GM12878 (cell line): ENCODE measurements at regions of chr5 and their contacts with region 1.

Region 1: GRCh38 chr5:81751009-81751835 is at the start of gene SSBP2:
- DNase-seq: peak; percentile 95
- ATAC-seq: peak; percentile 82
- H3K4me3 ChIP-seq: peak within 1 kb of the TSS; percentile 81
- H3K27ac ChIP-seq: peak within 1 kb of the TSS; percentile 95
- H3K4me1 ChIP-seq: peaks cover 10% of the 10 kb centered on the region
- H3K27me3 ChIP-seq: no peaks in the 10 kb centered on the region
- CTCF ChIP-seq: no peak
- EP300 ChIP-seq: peak; percentile 60 to 99; a peak in 3 of 4 replicates
- POLR2A ChIP-seq: peak; percentile 85
- RAD21 ChIP-seq: peak; percentile 50
- polyA plus RNA-seq, gene SSBP2: 117 to 120 TPM

Region 2: DNA sequence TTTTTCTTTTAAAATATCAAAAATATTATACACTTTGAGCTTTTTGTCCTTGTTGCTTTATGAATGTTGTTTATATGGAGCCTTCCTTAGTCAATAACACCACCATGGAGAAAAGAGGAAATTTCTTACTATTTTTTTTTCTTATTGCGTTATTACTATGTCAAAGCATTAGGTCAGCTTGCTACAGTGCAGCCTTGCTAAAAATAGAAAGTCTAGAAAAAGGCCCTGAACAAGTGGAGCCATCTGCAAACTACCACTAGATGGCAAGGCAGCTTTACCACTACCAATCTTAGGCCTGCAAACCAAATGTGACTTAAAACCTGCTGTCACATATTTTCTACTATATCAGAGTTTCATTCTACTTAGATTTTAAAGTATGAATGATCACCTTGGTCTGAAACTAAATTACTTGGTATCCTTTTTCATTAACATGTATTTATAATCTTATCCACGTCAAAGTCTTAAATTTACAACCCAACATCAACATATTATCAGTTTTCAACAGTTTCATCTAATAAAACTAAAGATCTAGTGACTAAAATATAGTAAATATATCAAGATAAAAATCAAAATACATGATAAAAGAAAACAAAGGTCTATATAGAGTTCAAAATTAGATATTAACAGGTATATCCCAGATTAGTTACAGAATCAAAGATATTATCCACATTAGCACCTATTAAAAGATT is 244.2 kb before region 1 on chr5:
- CTCF ChIA-PET with region 1: interaction called, 6 read pairs
- POLR2A ChIA-PET with region 1: no interaction called
- RAD21 ChIA-PET with region 1: interaction called, 4 read pairs
- SMC1A ChIA-PET with region 1: interaction called, 8 read pairs
- in situ Hi-C with region 1: loop called (anchors 5 kb)
- intact Hi-C with region 1: loop called (anchors 1 kb)
- DNase-seq: peak; percentile 67
- ATAC-seq: peak; percentile 100
- H3K4me3 ChIP-seq: no peak overlapping the region
- H3K27ac ChIP-seq: no peak overlapping the region
- H3K4me1 ChIP-seq: no peaks in the 10 kb centered on the region
- H3K27me3 ChIP-seq: no peaks in the 10 kb centered on the region
- CTCF ChIP-seq: peak; percentile 84 to 91 (median 90); a peak in 5 of 6 replicates
- EP300 ChIP-seq: no peak
- POLR2A ChIP-seq: no peak
- RAD21 ChIP-seq: peak; percentile 92

Region 3: DNA sequence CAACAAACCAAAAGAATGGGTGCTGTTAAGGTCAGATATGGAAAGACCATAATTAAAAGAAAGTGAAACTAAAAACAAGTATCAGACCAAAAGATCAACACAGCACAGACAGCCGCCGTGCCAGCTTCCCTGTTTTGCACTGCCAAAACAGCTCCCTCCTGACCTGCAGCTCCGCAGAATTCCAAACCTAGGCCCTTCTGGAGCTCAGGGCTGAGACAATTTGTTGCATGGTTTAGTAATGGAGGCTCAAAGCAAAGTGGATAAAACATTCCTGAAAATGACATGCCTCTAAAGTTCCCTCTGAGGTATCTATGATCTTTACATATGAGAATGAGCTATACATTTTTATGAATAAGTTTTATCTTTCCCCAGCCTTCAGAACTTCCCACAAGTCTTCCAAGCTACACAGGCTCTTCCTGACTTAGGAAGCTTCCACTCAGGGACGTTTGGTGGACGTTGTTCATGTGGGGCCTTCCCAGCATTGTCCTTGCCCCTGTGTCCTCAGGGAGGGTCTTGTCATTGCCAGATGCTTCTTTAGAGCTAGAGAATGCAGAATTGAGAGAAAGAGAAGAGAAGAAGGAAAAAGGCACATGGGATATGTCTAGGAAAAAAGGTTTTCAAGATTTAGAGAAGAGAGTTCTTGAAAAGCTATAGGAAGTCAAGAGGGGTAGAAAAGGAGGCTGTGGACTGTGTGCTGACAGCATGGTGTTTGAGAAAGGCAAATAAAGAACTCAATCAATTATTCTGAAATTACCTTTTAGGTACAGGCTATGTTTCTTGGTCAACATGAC is 28.1 kb after region 1 on chr5:
- CTCF ChIA-PET with region 1: interaction called, 7 read pairs
- POLR2A ChIA-PET with region 1: interaction called, 10 read pairs
- RAD21 ChIA-PET with region 1: interaction called, 10 read pairs
- SMC1A ChIA-PET with region 1: interaction called, 11 read pairs
- in situ Hi-C with region 1: no loop called
- intact Hi-C with region 1: no loop called
- DNase-seq: peak; percentile 23
- ATAC-seq: peak; percentile 95
- H3K4me3 ChIP-seq: peak overlapping the region; percentile 48
- H3K27ac ChIP-seq: peak overlapping the region; percentile 64
- H3K4me1 ChIP-seq: peaks cover 4% of the 10 kb centered on the region; the same call in 1 of the 2 replicates
- H3K27me3 ChIP-seq: no peaks in the 10 kb centered on the region
- CTCF ChIP-seq: no peak
- EP300 ChIP-seq: no peak
- POLR2A ChIP-seq: peak; percentile 77
- RAD21 ChIP-seq: no peak

Region 4: GRCh38 chr5:81851481-81852178 is 100.4 kb after region 1 on chr5:
- CTCF ChIA-PET with region 1: interaction called, 23 read pairs
- POLR2A ChIA-PET with region 1: interaction called, 35 read pairs
- RAD21 ChIA-PET with region 1: interaction called, 79 read pairs
- SMC1A ChIA-PET with region 1: interaction called, 56 read pairs
- in situ Hi-C with region 1: loop called (anchors 5 kb)
- intact Hi-C with region 1: loop called (anchors 1 kb)
- DNase-seq: peak; percentile 77
- ATAC-seq: peak; percentile 87
- H3K4me3 ChIP-seq: peak overlapping the region; percentile 55
- H3K27ac ChIP-seq: peak overlapping the region; percentile 87
- H3K4me1 ChIP-seq: peaks cover 26% of the 10 kb centered on the region
- H3K27me3 ChIP-seq: no peaks in the 10 kb centered on the region
- CTCF ChIP-seq: no peak
- EP300 ChIP-seq: peak; percentile 45 to 99; a peak in 3 of 4 replicates
- POLR2A ChIP-seq: peak; percentile 86
- RAD21 ChIP-seq: peak; percentile 31; the same call in 1 of the 2 replicates